Caco-2 (cell line): ENCODE measurements at regions of chr10 and their contacts with region 1.

Region 1: DNA sequence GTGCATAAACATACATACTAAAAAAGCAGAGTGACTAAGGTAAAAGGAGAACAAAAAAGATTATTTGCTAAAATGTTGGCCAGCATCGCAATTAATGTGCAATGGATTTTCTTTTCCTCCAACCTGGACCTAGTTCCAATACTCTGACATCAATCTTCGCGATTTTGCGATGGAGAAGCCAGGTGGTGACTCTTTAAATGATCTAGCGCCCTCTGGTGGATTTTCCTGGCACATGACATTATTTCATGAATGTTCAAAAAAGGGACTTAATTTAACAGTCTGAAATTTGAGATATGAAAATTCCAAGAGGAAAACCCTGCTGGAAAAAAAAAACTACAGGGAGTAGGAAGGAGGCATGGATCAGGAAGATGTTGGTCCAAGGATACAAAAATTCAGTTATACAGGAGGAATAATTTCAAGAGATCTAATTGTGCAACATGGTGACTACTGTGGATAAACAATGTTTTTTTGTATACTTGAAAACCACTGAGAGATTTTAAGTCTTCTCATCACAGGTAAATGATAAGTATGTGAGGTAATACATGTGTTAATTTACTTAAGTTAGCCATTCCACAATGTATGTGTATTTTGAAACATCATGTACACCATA is 4.3 kb upstream of the KCNMA1 start:
- DNase-seq: peak in 1 of 2 experiments; percentile 76
- H3K4me3 ChIP-seq: no peak overlapping the region
- H3K4me3 Mint-ChIP-seq: no peak overlapping the region
- H3K27ac Mint-ChIP-seq: no peak overlapping the region
- H3K4me1 ChIP-seq: peaks cover 6% of the 10 kb centered on the region
- H3K4me1 Mint-ChIP-seq: peaks cover 7% of the 10 kb centered on the region
- H3K27me3 ChIP-seq: peaks cover 2% of the 10 kb centered on the region; the same call in 1 of the 2 replicates
- H3K27me3 Mint-ChIP-seq: peaks cover 3% of the 10 kb centered on the region
- CTCF ChIP-seq: peak; percentile 70 to 76

Region 2: GRCh38 chr10:77165445-77166208 is 476.3 kb before region 1 on chr10:
- CTCF ChIA-PET with region 1: interaction called, 8 read pairs
- POLR2A ChIA-PET with region 1: no interaction called
- intact Hi-C with region 1: loop called (anchors 1 kb)
- DNase-seq: peak; percentile 65 to 76
- H3K4me3 ChIP-seq: no peak overlapping the region
- H3K4me3 Mint-ChIP-seq: peak overlapping the region; percentile 51
- H3K27ac Mint-ChIP-seq: no peak overlapping the region
- H3K4me1 ChIP-seq: peaks cover 3% of the 10 kb centered on the region; the same call in 1 of the 2 replicates
- H3K4me1 Mint-ChIP-seq: peaks cover 26% of the 10 kb centered on the region
- H3K27me3 ChIP-seq: no peaks in the 10 kb centered on the region
- H3K27me3 Mint-ChIP-seq: no peaks in the 10 kb centered on the region
- CTCF ChIP-seq: peak; percentile 74 to 76

Region 3: GRCh38 chr10:77173615-77174461 is 468.1 kb before region 1 on chr10:
- CTCF ChIA-PET with region 1: interaction called, 7 read pairs
- POLR2A ChIA-PET with region 1: no interaction called
- intact Hi-C with region 1: loop called (anchors 1 kb)
- DNase-seq: peak; percentile 75 to 87
- H3K4me3 ChIP-seq: no peak overlapping the region
- H3K4me3 Mint-ChIP-seq: no peak overlapping the region
- H3K27ac Mint-ChIP-seq: no peak overlapping the region
- H3K4me1 ChIP-seq: no peaks in the 10 kb centered on the region
- H3K4me1 Mint-ChIP-seq: no peaks in the 10 kb centered on the region
- H3K27me3 ChIP-seq: no peaks in the 10 kb centered on the region
- H3K27me3 Mint-ChIP-seq: no peaks in the 10 kb centered on the region
- CTCF ChIP-seq: peak; percentile 84 to 94

Region 4: DNA sequence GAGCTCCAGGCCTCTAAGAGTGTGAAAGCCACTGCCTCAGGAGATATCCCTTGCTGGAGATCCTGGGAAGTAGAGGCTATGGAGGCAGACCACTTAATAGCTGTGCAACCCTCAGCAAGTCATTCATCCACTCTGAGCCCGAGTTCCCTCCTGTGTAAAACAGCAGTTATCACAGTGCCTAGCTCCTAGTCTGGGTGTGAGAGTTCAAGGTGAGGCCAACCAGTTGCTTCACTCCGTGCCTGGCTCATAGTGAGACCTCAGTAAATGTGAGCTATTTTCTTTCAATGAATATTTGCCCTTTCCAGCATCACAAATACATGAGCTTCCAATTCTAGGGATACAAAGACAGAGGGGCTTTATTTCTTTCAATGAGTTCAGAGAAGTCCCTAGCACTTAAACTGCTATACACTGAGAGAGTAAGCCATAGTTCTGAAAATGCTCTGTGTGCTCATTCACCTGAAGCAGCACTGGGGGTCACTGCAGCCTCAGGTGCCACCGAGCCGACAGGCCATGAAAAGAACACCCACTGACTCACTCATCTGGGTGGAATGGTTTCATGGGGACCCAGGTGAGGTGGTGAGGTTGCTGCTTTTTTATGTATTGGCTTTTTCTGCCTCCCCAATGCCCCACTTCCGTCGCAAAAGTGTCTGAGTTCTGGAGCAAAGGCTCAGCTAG is 264.1 kb before region 1 on chr10:
- CTCF ChIA-PET with region 1: interaction called, 3 read pairs
- POLR2A ChIA-PET with region 1: no interaction called
- intact Hi-C with region 1: loop called (anchors 1 kb)
- DNase-seq: peak; percentile 56 to 64
- H3K4me3 ChIP-seq: no peak overlapping the region
- H3K4me3 Mint-ChIP-seq: no peak overlapping the region
- H3K27ac Mint-ChIP-seq: peak overlapping the region; percentile 9
- H3K4me1 ChIP-seq: peaks cover 16% of the 10 kb centered on the region
- H3K4me1 Mint-ChIP-seq: no peaks in the 10 kb centered on the region
- H3K27me3 ChIP-seq: no peaks in the 10 kb centered on the region
- H3K27me3 Mint-ChIP-seq: no peaks in the 10 kb centered on the region
- CTCF ChIP-seq: peak; percentile 43 to 69

Region 5: GRCh38 chr10:77431209-77431611 is 210.7 kb before region 1 on chr10:
- CTCF ChIA-PET with region 1: no interaction called
- POLR2A ChIA-PET with region 1: no interaction called
- intact Hi-C with region 1: loop called (anchors 2 kb)
- DNase-seq: peak; percentile 90 to 94
- H3K4me3 ChIP-seq: no peak overlapping the region
- H3K4me3 Mint-ChIP-seq: peak overlapping the region; percentile 47
- H3K27ac Mint-ChIP-seq: peak overlapping the region; percentile 92
- H3K4me1 ChIP-seq: peaks cover 62% of the 10 kb centered on the region
- H3K4me1 Mint-ChIP-seq: peaks cover 66% of the 10 kb centered on the region
- H3K27me3 ChIP-seq: no peaks in the 10 kb centered on the region
- H3K27me3 Mint-ChIP-seq: no peaks in the 10 kb centered on the region
- CTCF ChIP-seq: peak in 1 of 2 experiments; percentile 75

Region 6: DNA sequence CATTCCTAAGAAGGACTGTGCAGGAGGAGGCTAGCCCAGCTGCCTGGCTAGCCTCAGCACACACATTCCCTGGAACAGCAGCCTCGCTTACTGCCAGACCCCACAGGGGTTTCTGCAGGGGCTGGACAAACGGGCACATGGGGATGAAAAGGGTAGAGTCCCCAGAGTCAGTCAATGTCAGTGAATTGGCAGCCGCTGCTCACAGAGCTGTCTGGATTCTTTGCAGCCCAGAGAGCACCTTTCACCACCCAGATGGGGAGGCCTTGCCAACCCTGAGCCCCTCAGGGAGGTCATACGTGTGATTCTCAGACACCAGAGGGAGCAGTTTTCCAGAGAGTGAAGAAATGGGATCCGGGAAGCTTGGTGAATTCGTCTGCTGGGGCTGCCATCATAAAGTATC is 147.6 kb before region 1 on chr10:
- CTCF ChIA-PET with region 1: interaction called, 3 read pairs
- POLR2A ChIA-PET with region 1: no interaction called
- intact Hi-C with region 1: loop called (anchors 2 kb)
- DNase-seq: peak in 1 of 2 experiments; percentile 38
- H3K4me3 ChIP-seq: no peak overlapping the region
- H3K4me3 Mint-ChIP-seq: no peak overlapping the region
- H3K27ac Mint-ChIP-seq: no peak overlapping the region
- H3K4me1 ChIP-seq: peaks cover 9% of the 10 kb centered on the region
- H3K4me1 Mint-ChIP-seq: peaks cover 12% of the 10 kb centered on the region
- H3K27me3 ChIP-seq: no peaks in the 10 kb centered on the region
- H3K27me3 Mint-ChIP-seq: no peaks in the 10 kb centered on the region
- CTCF ChIP-seq: peak; percentile 34 to 48

Region 7: GRCh38 chr10:77586719-77587415 is 55.0 kb before region 1 on chr10:
- CTCF ChIA-PET with region 1: no interaction called
- POLR2A ChIA-PET with region 1: no interaction called
- intact Hi-C with region 1: loop called (anchors 1 kb)
- DNase-seq: peak in 1 of 2 experiments; percentile 58
- H3K4me3 ChIP-seq: no peak overlapping the region
- H3K4me3 Mint-ChIP-seq: no peak overlapping the region
- H3K27ac Mint-ChIP-seq: peak overlapping the region; percentile 73
- H3K4me1 ChIP-seq: peaks cover 22% of the 10 kb centered on the region; the same call in 1 of the 2 replicates
- H3K4me1 Mint-ChIP-seq: peaks cover 10% of the 10 kb centered on the region
- H3K27me3 ChIP-seq: no peaks in the 10 kb centered on the region
- H3K27me3 Mint-ChIP-seq: no peaks in the 10 kb centered on the region
- CTCF ChIP-seq: peak in 1 of 2 experiments; percentile 17

Region 8: GRCh38 chr10:77622889-77623291 is 19.0 kb before region 1 on chr10:
- CTCF ChIA-PET with region 1: no interaction called
- POLR2A ChIA-PET with region 1: no interaction called
- intact Hi-C with region 1: no loop called
- DNase-seq: no peak
- H3K4me3 ChIP-seq: no peak overlapping the region
- H3K4me3 Mint-ChIP-seq: no peak overlapping the region
- H3K27ac Mint-ChIP-seq: no peak overlapping the region
- H3K4me1 ChIP-seq: no peaks in the 10 kb centered on the region
- H3K4me1 Mint-ChIP-seq: peaks cover 10% of the 10 kb centered on the region
- H3K27me3 ChIP-seq: no peaks in the 10 kb centered on the region
- H3K27me3 Mint-ChIP-seq: no peaks in the 10 kb centered on the region
- CTCF ChIP-seq: no peak